OCI-LY7 (cell line): ENCODE measurements at regions of chr16 and their contacts with region 1.

Region 1: DNA sequence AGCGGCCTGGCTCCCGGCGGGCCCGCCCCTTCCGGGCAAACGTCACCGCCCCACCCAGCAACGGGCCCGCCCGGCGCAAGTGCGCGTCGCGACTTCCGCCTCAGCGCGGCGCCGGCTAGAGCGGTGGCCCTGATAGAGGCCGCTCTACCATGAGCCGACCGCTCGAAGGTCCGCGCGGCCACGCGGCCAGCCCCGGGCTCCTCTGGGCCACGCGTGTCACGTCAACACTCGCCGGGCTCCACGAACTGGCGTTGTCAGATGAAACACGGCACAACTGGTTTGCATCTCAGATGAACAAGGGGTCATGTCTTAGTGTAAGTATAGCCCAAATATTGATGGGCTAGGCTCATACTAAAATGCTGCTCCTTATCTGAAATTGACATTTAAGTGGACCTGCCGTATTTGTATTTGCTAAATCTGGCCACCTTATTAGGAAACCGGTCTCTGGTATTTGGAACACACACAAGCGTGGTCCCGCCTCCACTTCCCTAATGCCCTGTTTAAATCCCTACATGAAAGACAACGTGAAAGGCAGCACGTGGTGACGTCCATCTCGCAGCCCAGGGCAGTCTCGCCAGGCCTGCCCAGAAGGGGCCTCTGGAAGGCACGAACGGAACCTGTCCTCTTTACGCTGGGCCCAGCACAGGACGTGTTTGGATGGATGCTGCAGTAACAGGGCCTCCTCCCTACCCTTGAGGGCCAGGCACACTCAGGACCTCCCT is at the start of gene ZNF598:
- DNase-seq: peak; percentile 92
- H3K4me3 ChIP-seq: peak within 1 kb of the TSS; percentile 93
- H3K27ac ChIP-seq: peak within 1 kb of the TSS; percentile 66
- H3K4me1 ChIP-seq: peaks cover 27% of the 10 kb centered on the region
- CTCF ChIP-seq: no peak
- total RNA-seq, gene ZNF598: 26.3 and 37.2 TPM in 2 replicates

Region 2: GRCh38 chr16:1942810-1943726 is 66.9 kb before region 1 on chr16 and contains the start of gene MSRB1:
- CTCF ChIA-PET with region 1: no interaction called
- POLR2A ChIA-PET with region 1: no interaction called
- intact Hi-C with region 1: loop called (anchors 2 kb)
- DNase-seq: peak; percentile 100
- H3K4me3 ChIP-seq: peak within 1 kb of the TSS; percentile 84
- H3K27ac ChIP-seq: no peak within 1 kb of the TSS
- H3K4me1 ChIP-seq: peaks cover 18% of the 10 kb centered on the region
- CTCF ChIP-seq: peak; percentile 29; the same call in 1 of the 2 replicates
- total RNA-seq, gene MSRB1: 5.2 and 9.0 TPM in 2 replicates

Region 3: GRCh38 chr16:2329551-2329950 is 319.6 kb after region 1 on chr16:
- CTCF ChIA-PET with region 1: no interaction called
- POLR2A ChIA-PET with region 1: no interaction called
- intact Hi-C with region 1: no loop called
- DNase-seq: no peak
- H3K4me3 ChIP-seq: no peak overlapping the region
- H3K27ac ChIP-seq: no peak overlapping the region
- H3K4me1 ChIP-seq: no peaks in the 10 kb centered on the region
- CTCF ChIP-seq: no peak